ENCODE measurements at regions of chr4 and their contacts with region 1.

Region 1: GRCh38 chr4:152454398-152455011 is 81.4 kb downstream of the FBXW7 start:
- DNase-seq: no peak
- ATAC-seq: no peak
- H3K4me3 ChIP-seq: no peak overlapping the region
- H3K27ac ChIP-seq: no peak overlapping the region
- H3K4me1 ChIP-seq: peaks cover 0 to 17% (median 0%) of the 10 kb centered on the region in 9 donors
- H3K27me3 ChIP-seq: no peaks in the 10 kb centered on the region
- CTCF ChIP-seq: peak in 8 of 9 donors; percentile 34 to 68 (median 63)

Region 2: GRCh38 chr4:152328596-152328995 is 125.9 kb before region 1 on chr4:
- intact Hi-C with region 1: no loop called
- DNase-seq: no peak
- ATAC-seq: no peak
- H3K4me3 ChIP-seq: no peak overlapping the region
- H3K27ac ChIP-seq: no peak overlapping the region
- H3K4me1 ChIP-seq: peaks cover 0 to 12% (median 0%) of the 10 kb centered on the region in 9 donors
- H3K27me3 ChIP-seq: no peaks in the 10 kb centered on the region
- CTCF ChIP-seq: no peak

Region 3: GRCh38 chr4:152634110-152634760 is 179.7 kb after region 1 on chr4:
- intact Hi-C with region 1: loop called in 1 of 10 experiments (anchors 10 kb)
- DNase-seq: no peak
- ATAC-seq: no peak
- H3K4me3 ChIP-seq: no peak overlapping the region
- H3K27ac ChIP-seq: no peak overlapping the region
- H3K4me1 ChIP-seq: peaks cover 0 to 23% (median 0%) of the 10 kb centered on the region in 9 donors
- H3K27me3 ChIP-seq: no peaks in the 10 kb centered on the region
- CTCF ChIP-seq: no peak

Region 4: GRCh38 chr4:152640058-152640833 is 185.7 kb after region 1 on chr4:
- intact Hi-C with region 1: loop called in 5 of 10 experiments (anchors 1 to 10 kb)
- DNase-seq: no peak
- ATAC-seq: peak in 4 of 8 donors; percentile 45 to 59 (median 56)
- H3K4me3 ChIP-seq: no peak overlapping the region
- H3K27ac ChIP-seq: peak overlapping the region in 1 of 10 donors; percentile 28
- H3K4me1 ChIP-seq: peaks cover 0 to 50% (median 6%) of the 10 kb centered on the region in 9 donors
- H3K27me3 ChIP-seq: no peaks in the 10 kb centered on the region
- CTCF ChIP-seq: peak; percentile 43 to 80 (median 67)

Measured in heart right ventricle (tissue), 16 donors.